ENCODE measurements at regions of chrX and their contacts with region 1.

Region 1: DNA sequence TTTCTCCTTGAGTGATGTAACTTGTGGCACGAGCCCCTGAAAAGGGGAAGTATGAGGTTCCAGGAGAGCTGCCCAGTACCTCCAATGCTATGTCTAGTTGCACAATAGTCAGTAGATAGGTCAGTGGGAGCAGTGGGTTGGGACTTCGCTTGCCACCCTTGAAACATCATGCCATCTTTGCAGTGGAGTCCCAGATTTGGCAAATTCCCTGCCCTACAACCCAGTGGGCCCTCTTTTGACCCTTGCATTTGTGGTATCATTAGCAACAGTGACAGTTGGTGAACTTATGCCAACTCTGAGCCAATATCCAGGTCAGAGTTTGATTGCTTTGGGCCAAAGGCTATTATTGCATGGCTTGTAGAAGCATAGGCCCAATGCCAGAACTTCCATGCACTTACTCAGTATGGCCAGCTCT is 12.3 kb downstream of the FHL1 start:
- DNase-seq: no peak
- H3K4me3 ChIP-seq: no peak overlapping the region
- H3K27ac ChIP-seq: peak overlapping the region; percentile 22 to 54 (median 26)
- H3K4me1 ChIP-seq: peaks cover 0 to 18% of the 10 kb centered on the region in 2 donors
- H3K27me3 ChIP-seq: no peaks in the 10 kb centered on the region
- CTCF ChIP-seq: no peak
- POLR2A ChIP-seq: no peak

Region 2: GRCh38 chrX:136209016-136209738 is 49.6 kb after region 1 on chrX:
- intact Hi-C with region 1: loop called (anchors 10 kb)
- DNase-seq: peak; percentile 66 to 68
- H3K4me3 ChIP-seq: no peak overlapping the region
- H3K27ac ChIP-seq: peak overlapping the region; percentile 81 to 90 (median 85)
- H3K4me1 ChIP-seq: peaks cover 13 to 70% of the 10 kb centered on the region in 2 donors
- H3K27me3 ChIP-seq: no peaks in the 10 kb centered on the region
- CTCF ChIP-seq: peak; percentile 19 to 65 (median 56)
- POLR2A ChIP-seq: no peak